Aorta (tissue), 5 donors: ENCODE measurements at regions of chr20 and their contacts with region 1.

Region 1: DNA sequence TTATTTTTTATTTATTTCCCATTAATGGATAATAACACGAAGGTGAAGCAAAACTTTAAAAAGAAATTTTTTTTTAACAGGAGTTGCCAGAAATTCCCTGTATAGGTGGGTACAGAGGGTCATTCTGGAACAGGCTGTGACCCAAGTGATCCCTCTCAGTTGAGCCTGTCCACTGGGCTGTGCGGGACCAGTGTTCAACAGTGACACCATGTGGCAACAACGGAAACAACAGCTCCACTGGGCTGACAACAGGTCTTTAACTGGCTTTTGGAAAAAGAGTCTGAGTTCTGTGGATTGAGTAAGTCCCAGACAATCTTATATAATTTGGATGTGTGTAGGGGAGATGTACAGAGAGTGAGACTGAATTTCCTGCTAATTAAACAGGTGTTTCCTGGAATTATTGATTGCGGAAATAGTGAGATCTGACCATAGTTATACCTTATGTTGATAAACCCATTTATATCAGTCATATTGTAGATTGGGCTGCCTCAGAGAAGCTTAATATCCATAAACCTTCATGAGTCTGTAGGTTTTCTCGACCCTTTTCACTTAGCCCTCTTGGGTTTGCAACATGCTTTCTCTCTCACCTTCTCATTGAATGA is 17.6 kb downstream of the KIAA1755 start:
- DNase-seq: no peak
- ATAC-seq: no peak
- H3K4me3 ChIP-seq: no peak overlapping the region
- H3K27ac ChIP-seq: no peak overlapping the region
- H3K4me1 ChIP-seq: no peaks in the 10 kb centered on the region
- H3K27me3 ChIP-seq: no peaks in the 10 kb centered on the region

Region 2: DNA sequence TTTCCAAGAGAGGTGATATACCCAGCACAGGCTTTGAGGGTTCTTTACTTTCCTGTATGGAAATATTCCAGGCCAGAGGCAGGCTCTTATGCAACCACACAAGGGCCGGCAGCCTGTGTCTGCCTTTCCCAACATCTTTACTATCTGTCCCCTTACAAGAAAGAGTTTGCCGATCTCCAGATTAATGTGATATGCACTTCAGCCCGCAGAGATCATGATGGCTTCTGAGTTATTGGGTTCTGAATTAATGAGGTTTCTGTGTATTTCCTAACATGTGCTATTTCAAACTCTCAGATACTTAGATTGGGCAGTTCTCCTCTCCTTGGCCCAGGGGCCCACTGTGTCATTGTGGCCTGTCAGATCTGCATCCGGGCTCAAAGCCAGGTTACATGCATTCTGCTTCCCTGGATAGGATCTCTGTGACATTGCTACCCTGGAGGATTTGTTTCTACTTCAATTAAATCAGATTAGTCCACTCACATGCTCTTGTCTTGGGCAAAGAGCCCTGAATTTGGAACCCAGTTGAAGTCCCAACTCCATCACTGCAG is 134.4 kb before region 1 on chr20:
- intact Hi-C with region 1: no loop called
- DNase-seq: no peak
- ATAC-seq: peak; percentile 61
- H3K4me3 ChIP-seq: no peak overlapping the region
- H3K27ac ChIP-seq: peak overlapping the region; percentile 23 to 87
- H3K4me1 ChIP-seq: peaks cover 3 to 12% of the 10 kb centered on the region in 2 donors
- H3K27me3 ChIP-seq: no peaks in the 10 kb centered on the region

Region 3: GRCh38 chr20:38127011-38127621 is 115.8 kb before region 1 on chr20:
- intact Hi-C with region 1: no loop called
- DNase-seq: no peak
- ATAC-seq: peak; percentile 77
- H3K4me3 ChIP-seq: no peak overlapping the region
- H3K27ac ChIP-seq: peak overlapping the region; percentile 28 to 91
- H3K4me1 ChIP-seq: peaks cover 0 to 2% of the 10 kb centered on the region in 2 donors
- H3K27me3 ChIP-seq: no peaks in the 10 kb centered on the region

Region 4: GRCh38 chr20:38298705-38299288 is 55.8 kb after region 1 on chr20:
- intact Hi-C with region 1: loop called in 1 of 2 experiments (anchors 5 kb)
- DNase-seq: peak; percentile 90 to 91
- ATAC-seq: peak; percentile 92
- H3K4me3 ChIP-seq: no peak overlapping the region
- H3K27ac ChIP-seq: peak overlapping the region; percentile 53 to 71
- H3K4me1 ChIP-seq: no peaks in the 10 kb centered on the region
- H3K27me3 ChIP-seq: no peaks in the 10 kb centered on the region